Left cardiac atrium (tissue), 4 donors: ENCODE measurements at regions of chr2 and their contacts with region 1.

Region 1: DNA sequence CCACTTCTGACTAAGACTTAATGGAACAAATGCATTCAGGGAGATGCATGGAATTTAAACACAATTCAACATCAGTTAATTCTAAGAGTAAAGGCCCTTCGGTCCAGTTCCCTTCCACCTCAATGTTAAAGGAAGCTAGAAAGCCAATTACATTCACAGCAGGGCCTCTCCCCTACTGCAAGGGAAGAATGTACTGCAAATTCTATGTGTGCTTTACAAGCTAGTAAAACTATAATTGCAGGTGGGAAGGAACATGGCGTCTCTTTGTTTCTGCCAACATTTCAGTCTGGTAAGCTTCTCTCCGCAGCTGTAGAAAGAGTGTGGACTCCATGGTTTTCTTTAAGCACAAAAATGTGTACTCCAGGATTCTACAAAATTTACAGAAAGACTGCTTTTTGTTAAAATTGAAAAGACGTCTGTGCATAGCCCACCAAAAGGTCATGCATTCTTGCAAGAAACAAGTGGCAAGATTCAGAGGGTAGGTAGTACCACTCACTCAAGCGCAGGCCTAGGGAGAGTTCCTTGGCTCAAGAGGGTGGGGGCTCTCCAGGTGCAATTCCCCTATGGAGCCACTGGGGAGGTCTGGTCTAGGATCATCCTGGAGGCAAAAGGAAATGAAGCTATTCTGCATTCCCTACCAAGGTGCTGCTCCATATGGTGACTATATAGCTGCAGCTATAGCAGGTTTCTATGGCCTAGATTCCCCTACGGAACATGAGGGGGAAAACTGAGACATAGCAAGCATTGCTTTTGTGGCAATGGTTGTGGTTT is 127.0 kb upstream of the FZD5 start:
- DNase-seq: no peak
- ATAC-seq: no peak

Region 2: DNA sequence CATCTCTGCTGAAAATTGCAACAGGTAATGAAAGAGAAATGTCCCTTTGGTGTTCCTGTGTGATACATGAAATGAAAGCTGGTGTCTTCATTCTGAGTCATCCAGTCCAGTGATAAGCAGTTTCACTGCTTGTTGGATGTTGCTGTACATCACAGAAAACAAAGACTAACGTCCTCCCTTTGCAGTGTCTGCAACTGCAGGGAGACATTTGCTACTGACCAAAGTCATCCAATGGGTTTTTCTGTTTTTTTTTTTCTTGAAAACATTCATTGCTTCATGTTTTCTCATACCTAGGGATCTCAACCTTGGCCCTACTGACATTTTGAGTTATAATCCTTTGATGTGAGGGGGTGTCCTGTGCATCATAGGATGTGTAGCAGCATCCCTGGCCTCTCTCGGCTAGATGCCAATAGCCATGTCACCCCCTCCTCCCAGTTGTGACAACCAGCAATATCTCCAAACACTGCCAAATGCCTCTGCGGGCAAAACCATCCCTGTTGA is 63.4 kb before region 1 on chr2:
- intact Hi-C with region 1: loop called in 1 of 2 experiments (anchors 10 kb)
- DNase-seq: no peak
- ATAC-seq: peak in 1 of 2 donors; percentile 32

Region 3: GRCh38 chr2:208306291-208306690 is 409.6 kb after region 1 on chr2:
- intact Hi-C with region 1: no loop called
- DNase-seq: no peak
- ATAC-seq: no peak